ENCODE measurements at regions of chr4 and their contacts with region 1.

Region 1: GRCh38 chr4:10164877-10165283 is 48.3 kb upstream of the WDR1 start:
- DNase-seq: peak in 2 of 3 donors; percentile 28 to 61
- ATAC-seq: peak in 1 of 2 donors; percentile 16
- H3K4me3 ChIP-seq: no peak overlapping the region
- H3K27ac ChIP-seq: no peak overlapping the region
- H3K4me1 ChIP-seq: no peaks in the 10 kb centered on the region
- H3K27me3 ChIP-seq: no peaks in the 10 kb centered on the region

Region 2: DNA sequence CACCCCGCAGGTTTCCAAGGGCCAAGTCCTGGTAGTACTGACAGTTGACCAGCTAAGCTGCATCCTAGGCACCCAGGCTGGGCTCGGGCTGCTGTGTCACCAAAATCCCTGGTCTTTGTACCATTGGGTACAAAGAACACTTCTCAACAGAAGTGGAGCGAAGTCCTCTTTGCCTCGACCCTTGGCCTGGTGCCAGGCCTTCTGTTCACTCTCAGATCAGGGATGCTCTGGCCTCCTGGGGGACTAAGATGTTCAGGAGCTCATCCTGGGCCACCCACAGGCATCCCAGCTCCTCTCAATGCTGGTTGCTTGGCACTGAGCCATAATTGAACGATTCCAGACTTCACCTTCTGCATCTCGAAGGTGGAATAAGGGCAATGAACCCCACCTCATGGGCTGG is 129.8 kb before region 1 on chr4:
- intact Hi-C with region 1: no loop called
- DNase-seq: no peak
- ATAC-seq: no peak
- H3K4me3 ChIP-seq: no peak overlapping the region
- H3K27ac ChIP-seq: no peak overlapping the region
- H3K4me1 ChIP-seq: peaks cover 14% of the 10 kb centered on the region
- H3K27me3 ChIP-seq: no peaks in the 10 kb centered on the region

Region 3: DNA sequence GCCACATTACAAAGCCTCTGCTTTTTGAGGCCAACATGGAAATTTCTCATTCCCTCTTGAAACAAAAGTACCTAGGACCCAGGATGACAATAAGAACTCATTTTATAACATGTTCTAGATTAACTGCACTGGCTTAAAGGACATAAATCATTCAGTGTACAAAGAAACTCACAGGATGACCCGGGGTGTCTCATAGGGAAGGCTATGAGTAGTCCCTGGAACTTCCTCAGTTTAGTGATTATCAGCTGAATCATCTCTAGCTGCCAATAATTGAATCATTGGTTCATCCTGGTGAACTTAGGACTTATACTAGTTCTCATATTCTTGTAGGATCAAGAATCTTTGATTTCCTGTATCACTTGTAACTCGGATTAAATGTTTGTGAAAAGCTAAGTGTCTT is 47.5 kb after region 1 on chr4:
- intact Hi-C with region 1: no loop called
- DNase-seq: no peak
- ATAC-seq: no peak
- H3K4me3 ChIP-seq: no peak overlapping the region
- H3K27ac ChIP-seq: no peak overlapping the region
- H3K4me1 ChIP-seq: no peaks in the 10 kb centered on the region
- H3K27me3 ChIP-seq: no peaks in the 10 kb centered on the region

Region 4: DNA sequence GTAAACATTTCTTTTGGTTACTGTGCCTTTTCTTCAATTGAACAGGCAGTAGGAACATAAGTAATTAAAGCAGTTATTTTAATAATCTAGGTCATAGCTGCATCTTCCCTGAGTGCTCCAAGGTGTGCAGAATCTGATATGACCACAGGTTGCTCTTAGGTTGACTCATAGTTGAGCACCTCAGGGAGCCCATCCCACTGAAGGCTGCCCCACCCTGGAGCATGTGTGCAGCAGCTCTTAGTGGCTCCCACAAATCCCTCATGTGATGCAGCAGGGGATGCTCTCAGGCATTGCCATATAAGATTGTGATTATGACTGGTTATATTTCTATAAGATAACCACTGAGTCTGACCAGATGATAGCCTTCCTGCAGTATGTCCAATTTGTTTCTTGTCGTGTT is 220.1 kb after region 1 on chr4:
- intact Hi-C with region 1: loop called in 1 of 4 experiments (anchors 5 kb)
- DNase-seq: no peak
- ATAC-seq: no peak
- H3K4me3 ChIP-seq: no peak overlapping the region
- H3K27ac ChIP-seq: no peak overlapping the region
- H3K4me1 ChIP-seq: no peaks in the 10 kb centered on the region
- H3K27me3 ChIP-seq: no peaks in the 10 kb centered on the region

Region 5: GRCh38 chr4:10403633-10404445 is 239.0 kb after region 1 on chr4:
- intact Hi-C with region 1: loop called (anchors 2 to 5 kb)
- DNase-seq: no peak
- ATAC-seq: peak in 1 of 2 donors; percentile 37
- H3K4me3 ChIP-seq: no peak overlapping the region
- H3K27ac ChIP-seq: no peak overlapping the region
- H3K4me1 ChIP-seq: no peaks in the 10 kb centered on the region
- H3K27me3 ChIP-seq: no peaks in the 10 kb centered on the region

Region 6: GRCh38 chr4:10535912-10536311 is 371.0 kb after region 1 on chr4:
- intact Hi-C with region 1: loop called in 1 of 4 experiments (anchors 5 kb)
- DNase-seq: no peak
- ATAC-seq: no peak
- H3K4me3 ChIP-seq: no peak overlapping the region
- H3K27ac ChIP-seq: no peak overlapping the region
- H3K4me1 ChIP-seq: no peaks in the 10 kb centered on the region
- H3K27me3 ChIP-seq: peaks cover 3% of the 10 kb centered on the region

Region 7: GRCh38 chr4:10554694-10555093 is 389.8 kb after region 1 on chr4:
- intact Hi-C with region 1: loop called in 3 of 4 experiments (anchors 5 kb)
- DNase-seq: no peak
- ATAC-seq: peak; percentile 79
- H3K4me3 ChIP-seq: no peak overlapping the region
- H3K27ac ChIP-seq: no peak overlapping the region
- H3K4me1 ChIP-seq: no peaks in the 10 kb centered on the region
- H3K27me3 ChIP-seq: no peaks in the 10 kb centered on the region

Region 8: GRCh38 chr4:10803713-10804343 is 638.9 kb after region 1 on chr4:
- intact Hi-C with region 1: no loop called
- DNase-seq: no peak
- ATAC-seq: no peak
- H3K4me3 ChIP-seq: no peak overlapping the region
- H3K27ac ChIP-seq: no peak overlapping the region
- H3K4me1 ChIP-seq: no peaks in the 10 kb centered on the region
- H3K27me3 ChIP-seq: no peaks in the 10 kb centered on the region